Posterior cingulate gyrus (tissue), 11 donors: ENCODE measurements at regions of chr7 and their contacts with region 1.

Region 1: DNA sequence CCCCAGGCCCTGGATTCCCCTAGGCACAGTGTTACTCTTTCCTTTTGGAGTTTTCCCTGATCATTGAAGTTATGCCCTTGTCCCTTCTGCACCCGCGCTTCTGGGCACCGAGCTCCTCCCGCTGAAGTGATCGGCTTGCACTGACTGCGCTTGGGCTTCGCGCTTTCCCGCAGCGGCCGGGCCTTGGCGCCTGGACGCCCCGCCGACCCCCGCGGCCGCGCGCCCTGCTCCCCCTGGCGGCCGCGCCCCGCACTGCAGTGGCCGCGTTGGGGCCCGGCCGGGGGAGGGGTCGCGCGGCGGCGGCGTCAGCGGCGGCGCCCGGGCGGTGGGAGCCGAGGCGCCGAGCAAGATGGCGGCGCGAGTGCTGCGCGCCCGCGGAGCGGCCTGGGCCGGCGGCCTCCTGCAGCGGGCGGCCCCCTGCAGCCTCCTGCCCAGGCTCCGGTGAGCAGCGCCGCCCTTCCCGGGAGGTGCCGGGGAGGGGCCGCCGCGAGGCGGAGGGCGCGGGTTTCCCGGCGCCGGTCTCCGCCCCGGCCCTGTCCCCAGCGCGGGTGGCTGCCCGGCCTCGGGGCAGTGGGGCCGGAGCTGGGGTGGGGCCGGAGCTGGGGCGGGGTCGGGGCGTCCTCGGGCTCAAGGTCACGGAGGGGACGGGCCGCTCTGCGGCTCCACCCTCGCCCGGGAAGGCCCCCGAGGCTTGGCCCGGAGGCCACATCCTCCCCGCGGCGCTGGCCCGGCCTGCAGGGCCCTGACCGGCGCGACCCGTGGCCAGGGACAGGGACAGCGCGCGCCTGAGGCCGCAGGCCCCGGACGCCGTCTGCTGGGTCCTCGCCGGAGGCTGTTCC is at the start of gene NIPSNAP2:
- DNase-seq: peak; percentile 34 to 94 (median 56)

Region 2: GRCh38 chr7:55641273-55641691 is 323.2 kb before region 1 on chr7:
- intact Hi-C with region 1: loop called (anchors 5 kb)
- DNase-seq: peak in 1 of 10 donors; percentile 12

Region 3: DNA sequence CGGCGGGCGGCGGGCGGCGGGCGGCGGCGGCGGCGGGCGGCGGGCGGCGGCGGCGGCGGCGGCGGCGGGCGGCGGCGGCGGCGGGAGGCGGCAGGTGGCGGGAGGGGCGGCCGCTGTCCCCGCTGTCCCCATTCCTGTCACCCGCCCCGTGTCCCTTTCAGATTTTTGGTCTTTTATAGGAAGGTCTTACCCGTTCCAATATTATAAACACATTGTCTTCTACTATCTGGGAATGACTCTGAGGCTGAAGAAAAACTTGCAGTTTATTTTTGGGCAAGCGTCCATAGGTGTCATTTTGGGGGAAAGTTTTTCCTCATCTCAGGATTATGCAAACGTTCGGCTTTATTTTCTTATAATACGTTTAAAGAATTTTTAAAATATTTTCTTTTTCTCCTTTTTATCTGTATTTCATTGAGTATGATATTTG is 76.6 kb before region 1 on chr7:
- intact Hi-C with region 1: loop called (anchors 2 kb)
- DNase-seq: no peak

Region 4: DNA sequence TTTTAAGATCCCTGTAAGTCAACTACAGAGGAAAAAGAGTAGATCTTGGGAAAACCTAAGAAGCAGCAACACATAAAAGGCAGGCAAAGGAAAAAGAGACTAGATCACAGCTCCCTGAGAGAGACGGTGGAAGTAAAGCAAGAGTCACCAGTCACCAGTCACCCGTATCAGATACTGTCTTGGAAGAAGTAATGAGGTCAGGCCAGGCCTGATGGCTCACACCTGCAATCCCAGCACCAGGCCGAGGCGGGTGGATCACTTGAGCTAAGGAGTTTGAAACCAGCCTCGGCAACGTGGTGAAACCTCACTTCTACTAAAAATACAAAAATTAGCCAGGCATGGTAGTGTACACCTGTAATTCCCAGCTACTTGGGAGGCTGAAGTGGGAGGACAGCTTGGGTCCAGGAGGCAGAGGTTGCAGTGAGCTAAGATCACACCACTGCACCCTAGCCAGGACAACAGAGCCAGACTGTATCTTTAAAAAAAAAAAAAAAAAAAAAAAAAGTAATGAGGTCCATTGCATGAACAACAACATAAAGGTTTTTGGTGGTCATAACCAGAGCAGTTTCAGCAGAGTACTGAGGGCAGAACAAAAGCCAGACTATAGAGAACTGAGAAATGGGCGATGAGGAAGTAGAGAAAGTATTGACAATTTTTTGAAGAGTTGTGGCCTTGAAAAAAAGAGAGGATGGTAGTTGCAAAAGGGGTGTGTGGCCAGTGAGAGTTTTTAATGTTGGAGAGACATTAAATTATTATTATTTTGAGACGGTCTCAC is 60.3 kb before region 1 on chr7:
- intact Hi-C with region 1: no loop called
- DNase-seq: no peak

Region 5: GRCh38 chr7:56051339-56052191 is 87.1 kb after region 1 on chr7 and contains the starts of genes CCT6A and PSPH:
- intact Hi-C with region 1: loop called (anchors 5 kb)
- DNase-seq: peak; percentile 96 to 100 (median 98)